ENCODE measurements at regions of chr3 and their contacts with region 1.

Region 1: GRCh38 chr3:15629860-15630597 is 28.5 kb downstream of the BTD start:
- DNase-seq: peak in 1 of 2 donors; percentile 78
- H3K4me3 ChIP-seq: peak overlapping the region; percentile 47 to 59
- H3K27ac ChIP-seq: peak overlapping the region in 1 of 2 donors; percentile 10
- H3K4me1 ChIP-seq: peaks cover 9 to 17% of the 10 kb centered on the region in 2 donors
- H3K27me3 ChIP-seq: no peaks in the 10 kb centered on the region
- CTCF ChIP-seq: peak; percentile 72 to 81 (median 78)

Region 2: DNA sequence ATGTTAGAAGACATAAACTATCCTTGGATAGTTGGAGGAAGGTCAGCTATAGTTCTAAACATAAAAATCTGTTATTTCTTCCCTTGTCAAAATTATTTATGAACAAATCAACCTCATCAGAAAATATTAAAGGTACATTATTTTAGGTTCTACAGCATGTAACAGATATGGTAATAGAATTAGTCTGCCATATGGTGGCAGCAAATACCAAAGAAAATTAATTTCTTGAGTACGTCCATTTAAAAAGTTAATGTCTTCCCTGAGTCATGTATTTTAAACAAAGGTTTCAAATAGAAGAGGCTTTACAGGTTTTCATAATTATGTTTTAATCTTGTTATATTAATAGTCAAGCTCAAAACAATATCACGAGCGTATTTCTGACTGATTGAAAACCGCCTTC is 185.7 kb after region 1 on chr3:
- intact Hi-C with region 1: loop called (anchors 2 kb)
- DNase-seq: no peak
- H3K4me3 ChIP-seq: no peak overlapping the region
- H3K27ac ChIP-seq: no peak overlapping the region
- H3K4me1 ChIP-seq: no peaks in the 10 kb centered on the region
- H3K27me3 ChIP-seq: no peaks in the 10 kb centered on the region
- CTCF ChIP-seq: peak; percentile 20 to 49 (median 28)

Measured in ascending aorta (tissue), 2 donors.